Calu3 (cell line): ENCODE measurements at regions of chrX and their contacts with region 1.

Region 1: DNA sequence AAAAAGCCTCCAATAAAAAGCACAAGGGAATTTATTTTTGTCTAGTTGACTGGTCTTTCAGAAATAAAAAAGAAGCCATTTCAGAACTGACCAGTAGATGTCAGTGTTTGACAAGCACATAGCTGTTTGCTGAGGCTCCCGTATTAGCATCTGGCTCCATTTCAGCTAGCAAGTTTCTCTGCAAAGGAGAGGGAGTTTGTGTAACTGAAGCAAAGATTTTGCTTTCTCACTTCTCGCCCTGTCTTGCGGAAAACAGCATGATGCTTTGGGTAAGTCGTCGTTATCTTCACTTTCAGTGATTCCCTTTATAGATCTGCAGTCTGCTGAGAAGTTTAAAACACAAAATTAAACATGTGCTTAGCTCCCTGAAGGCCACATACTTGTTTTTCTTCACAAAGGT is 85.5 kb downstream of the CT47B1 start:
- DNase-seq: peak; percentile 16
- H3K4me3 Mint-ChIP-seq: no peak overlapping the region
- H3K27ac Mint-ChIP-seq: no peak overlapping the region
- H3K4me1 Mint-ChIP-seq: peaks cover 22% of the 10 kb centered on the region
- H3K27me3 Mint-ChIP-seq: no peaks in the 10 kb centered on the region
- CTCF ChIP-seq: peak; percentile 18

Region 2: GRCh38 chrX:121165930-121166359 is 375.8 kb after region 1 on chrX:
- CTCF ChIA-PET with region 1: no interaction called
- intact Hi-C with region 1: no loop called
- DNase-seq: no peak
- H3K4me3 Mint-ChIP-seq: no peak overlapping the region
- H3K27ac Mint-ChIP-seq: no peak overlapping the region
- H3K4me1 Mint-ChIP-seq: no peaks in the 10 kb centered on the region
- H3K27me3 Mint-ChIP-seq: no peaks in the 10 kb centered on the region
- CTCF ChIP-seq: no peak

Region 3: DNA sequence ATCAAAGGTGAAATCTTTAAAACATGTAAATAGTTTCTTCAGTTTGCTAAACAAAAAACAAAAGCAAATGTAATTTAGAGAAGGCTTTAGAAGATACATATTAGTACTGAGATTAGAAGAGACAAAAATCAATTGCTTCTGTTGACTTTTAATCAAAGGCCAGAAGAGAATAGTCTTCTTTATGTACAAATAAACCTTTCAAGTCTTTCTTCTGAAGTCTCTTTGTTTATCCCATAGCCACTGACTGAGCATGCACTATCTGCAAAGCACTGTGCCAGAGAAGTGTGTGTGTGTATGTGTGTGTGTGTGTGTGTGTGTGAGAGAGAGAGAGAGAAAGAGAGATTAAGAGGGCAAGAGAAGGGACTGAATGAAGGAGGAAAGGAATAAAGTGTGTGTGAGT is 455.6 kb after region 1 on chrX:
- CTCF ChIA-PET with region 1: no interaction called
- intact Hi-C with region 1: loop called (anchors 10 kb)
- DNase-seq: no peak
- H3K4me3 Mint-ChIP-seq: no peak overlapping the region
- H3K27ac Mint-ChIP-seq: no peak overlapping the region
- H3K4me1 Mint-ChIP-seq: peaks cover 26% of the 10 kb centered on the region
- H3K27me3 Mint-ChIP-seq: no peaks in the 10 kb centered on the region
- CTCF ChIP-seq: no peak

Region 4: GRCh38 chrX:121256647-121257046 is 466.5 kb after region 1 on chrX:
- CTCF ChIA-PET with region 1: no interaction called
- intact Hi-C with region 1: no loop called
- DNase-seq: no peak
- H3K4me3 Mint-ChIP-seq: no peak overlapping the region
- H3K27ac Mint-ChIP-seq: no peak overlapping the region
- H3K4me1 Mint-ChIP-seq: no peaks in the 10 kb centered on the region
- H3K27me3 Mint-ChIP-seq: no peaks in the 10 kb centered on the region
- CTCF ChIP-seq: no peak

Region 5: DNA sequence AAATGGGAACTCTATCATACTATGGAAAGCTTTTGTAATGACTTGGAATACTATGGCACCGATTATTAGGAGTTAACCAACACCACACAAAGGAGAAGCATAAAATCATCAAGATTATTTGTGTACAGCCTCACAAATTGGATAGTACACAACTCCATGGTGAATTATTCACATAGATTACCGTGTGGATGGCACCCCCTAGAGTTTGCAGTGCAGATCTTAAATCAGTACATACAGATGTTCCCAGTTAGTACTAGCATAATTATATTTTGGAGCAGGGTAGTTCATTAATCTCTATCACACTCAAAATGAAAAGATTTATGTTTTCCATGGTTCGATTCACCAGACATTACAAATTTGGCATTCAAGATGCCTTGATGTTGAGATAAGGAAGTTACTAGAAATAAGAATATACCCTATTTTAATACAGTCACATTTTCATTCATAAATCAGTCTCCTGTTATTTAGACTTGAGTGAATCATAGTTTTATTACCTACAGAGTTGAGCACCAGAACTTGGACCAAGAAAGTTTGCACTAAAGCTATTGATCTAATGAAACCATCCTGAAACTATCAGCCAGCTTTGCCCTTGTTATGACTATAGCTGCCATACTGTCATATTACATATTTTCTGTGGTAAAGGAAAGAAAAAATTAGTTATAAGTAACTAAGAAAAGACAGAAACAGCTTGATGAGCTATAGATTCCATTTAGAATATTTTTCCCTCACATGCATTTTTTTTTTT is 789.1 kb after region 1 on chrX:
- CTCF ChIA-PET with region 1: no interaction called
- intact Hi-C with region 1: loop called (anchors 1 kb)
- DNase-seq: peak; percentile 49
- H3K4me3 Mint-ChIP-seq: no peak overlapping the region
- H3K27ac Mint-ChIP-seq: no peak overlapping the region
- H3K4me1 Mint-ChIP-seq: no peaks in the 10 kb centered on the region
- H3K27me3 Mint-ChIP-seq: no peaks in the 10 kb centered on the region
- CTCF ChIP-seq: no peak